IMR-90 (cell line): ENCODE measurements at regions of chr1 and their contacts with region 1.

Region 1: GRCh38 chr1:28239004-28239403 is 3.1 kb downstream of the ATP5IF1 start:
- DNase-seq: no peak
- ATAC-seq: no peak
- H3K4me3 ChIP-seq: no peak overlapping the region
- H3K27ac ChIP-seq: no peak overlapping the region
- H3K4me1 ChIP-seq: peaks cover 2% of the 10 kb centered on the region
- H3K27me3 ChIP-seq: no peaks in the 10 kb centered on the region
- CTCF ChIP-seq: no peak
- POLR2A ChIP-seq: no peak
- RAD21 ChIP-seq: no peak

Region 2: GRCh38 chr1:28045777-28046176 is 193.2 kb before region 1 on chr1:
- CTCF ChIA-PET with region 1: no interaction called
- POLR2A ChIA-PET with region 1: no interaction called
- dilution Hi-C with region 1: no loop called
- in situ Hi-C with region 1: no loop called
- intact Hi-C with region 1: no loop called
- DNase-seq: no peak
- ATAC-seq: no peak
- H3K4me3 ChIP-seq: no peak overlapping the region
- H3K27ac ChIP-seq: no peak overlapping the region
- H3K4me1 ChIP-seq: peaks cover 3% of the 10 kb centered on the region; the same call in 1 of the 2 replicates
- H3K27me3 ChIP-seq: no peaks in the 10 kb centered on the region
- CTCF ChIP-seq: no peak
- POLR2A ChIP-seq: no peak
- RAD21 ChIP-seq: no peak

Region 3: GRCh38 chr1:28127617-28128257 is 111.3 kb before region 1 on chr1:
- CTCF ChIA-PET with region 1: no interaction called
- POLR2A ChIA-PET with region 1: no interaction called
- dilution Hi-C with region 1: no loop called
- in situ Hi-C with region 1: no loop called
- intact Hi-C with region 1: no loop called
- DNase-seq: no peak
- ATAC-seq: no peak
- H3K4me3 ChIP-seq: no peak overlapping the region
- H3K27ac ChIP-seq: no peak overlapping the region
- H3K4me1 ChIP-seq: peaks cover 5% of the 10 kb centered on the region; the same call in 1 of the 2 replicates
- H3K27me3 ChIP-seq: no peaks in the 10 kb centered on the region
- CTCF ChIP-seq: no peak
- POLR2A ChIP-seq: no peak
- RAD21 ChIP-seq: no peak

Region 4: DNA sequence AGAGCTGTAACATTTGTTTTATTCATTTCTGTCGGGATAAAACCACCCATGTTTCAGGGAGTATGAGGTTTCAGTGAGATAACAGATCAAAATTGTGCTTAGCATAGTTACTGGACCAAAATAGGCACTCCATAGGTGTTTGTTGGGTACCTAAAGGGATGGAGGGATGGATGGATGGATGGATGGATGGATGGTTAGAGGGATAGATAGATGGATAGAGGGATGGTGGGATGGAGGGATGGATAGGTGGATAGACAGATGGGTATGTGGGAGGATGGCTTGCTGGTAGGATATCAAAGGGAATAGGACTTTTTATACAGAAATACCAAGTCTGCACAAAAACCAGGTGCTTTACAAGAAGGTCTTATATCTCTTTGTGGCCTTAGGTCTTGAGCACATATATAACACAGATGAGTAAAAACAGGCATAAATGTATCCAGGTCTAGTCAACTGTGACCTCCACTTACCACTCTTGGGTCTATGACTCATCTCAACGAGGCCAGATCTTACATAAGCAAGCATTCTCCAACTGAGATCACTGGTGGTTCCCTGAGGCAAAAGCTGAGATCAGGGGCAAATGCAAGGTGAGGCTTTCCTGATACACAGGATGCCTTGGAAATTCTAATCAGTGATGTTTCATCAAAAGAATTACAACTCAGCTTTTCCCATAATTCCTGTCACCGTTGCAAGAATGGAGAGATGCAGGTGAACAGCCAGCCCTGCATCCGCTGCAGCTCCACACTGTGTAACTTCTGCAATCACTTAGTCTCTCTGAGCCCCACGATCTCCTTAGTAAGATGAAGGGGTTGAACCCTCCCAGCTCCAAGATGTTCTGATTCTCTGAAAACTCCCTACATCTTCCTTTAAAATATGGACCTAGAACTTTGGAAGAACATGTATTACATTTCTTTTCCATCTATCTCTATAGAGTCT is 94.5 kb before region 1 on chr1:
- CTCF ChIA-PET with region 1: no interaction called
- POLR2A ChIA-PET with region 1: interaction called, 17 read pairs
- dilution Hi-C with region 1: no loop called
- in situ Hi-C with region 1: no loop called
- intact Hi-C with region 1: no loop called
- DNase-seq: peak; percentile 80
- ATAC-seq: peak; percentile 62
- H3K4me3 ChIP-seq: no peak overlapping the region
- H3K27ac ChIP-seq: no peak overlapping the region
- H3K4me1 ChIP-seq: no peaks in the 10 kb centered on the region
- H3K27me3 ChIP-seq: no peaks in the 10 kb centered on the region
- CTCF ChIP-seq: no peak
- POLR2A ChIP-seq: no peak
- RAD21 ChIP-seq: no peak

Region 5: DNA sequence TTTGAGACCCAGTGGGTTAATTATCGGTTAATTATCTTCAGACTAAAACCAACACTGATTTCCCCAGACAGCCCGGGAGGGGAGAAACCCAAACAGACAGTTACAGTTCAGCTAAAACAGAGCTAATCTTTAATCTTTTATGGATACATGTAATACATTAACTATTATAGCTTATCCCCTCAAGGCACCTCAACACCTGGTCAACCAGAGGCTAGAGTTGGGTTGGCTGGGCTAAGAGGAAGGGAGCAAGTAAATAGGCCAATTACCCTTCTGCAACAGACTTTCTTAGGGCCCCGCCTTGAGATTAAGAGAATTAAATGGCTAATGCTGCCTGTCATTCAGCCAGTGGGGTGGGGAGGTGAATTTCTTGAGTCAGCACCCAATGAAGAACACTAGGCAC is 83.2 kb after region 1 on chr1:
- CTCF ChIA-PET with region 1: no interaction called
- POLR2A ChIA-PET with region 1: no interaction called
- dilution Hi-C with region 1: no loop called
- in situ Hi-C with region 1: no loop called
- intact Hi-C with region 1: no loop called
- DNase-seq: no peak
- ATAC-seq: no peak
- H3K4me3 ChIP-seq: no peak overlapping the region
- H3K27ac ChIP-seq: no peak overlapping the region
- H3K4me1 ChIP-seq: no peaks in the 10 kb centered on the region
- H3K27me3 ChIP-seq: peaks cover 4% of the 10 kb centered on the region; the same call in 1 of the 2 replicates
- CTCF ChIP-seq: no peak
- POLR2A ChIP-seq: no peak
- RAD21 ChIP-seq: no peak